ENCODE measurements at regions of chrX and their contacts with region 1.

Region 1: GRCh38 chrX:4944767-4945166 is 1231.3 kb upstream of the PRKX start:
- DNase-seq: no peak
- H3K4me3 ChIP-seq: no peak overlapping the region
- H3K27ac ChIP-seq: no peak overlapping the region
- H3K4me1 ChIP-seq: no peaks in the 10 kb centered on the region
- H3K27me3 ChIP-seq: no peaks in the 10 kb centered on the region
- CTCF ChIP-seq: no peak

Region 2: GRCh38 chrX:4964112-4964511 is 19.3 kb after region 1 on chrX:
- CTCF ChIA-PET with region 1: no interaction called
- POLR2A ChIA-PET with region 1: no interaction called
- intact Hi-C with region 1: no loop called
- DNase-seq: no peak
- H3K4me3 ChIP-seq: no peak overlapping the region
- H3K27ac ChIP-seq: no peak overlapping the region
- H3K4me1 ChIP-seq: no peaks in the 10 kb centered on the region
- H3K27me3 ChIP-seq: no peaks in the 10 kb centered on the region
- CTCF ChIP-seq: no peak

Region 3: DNA sequence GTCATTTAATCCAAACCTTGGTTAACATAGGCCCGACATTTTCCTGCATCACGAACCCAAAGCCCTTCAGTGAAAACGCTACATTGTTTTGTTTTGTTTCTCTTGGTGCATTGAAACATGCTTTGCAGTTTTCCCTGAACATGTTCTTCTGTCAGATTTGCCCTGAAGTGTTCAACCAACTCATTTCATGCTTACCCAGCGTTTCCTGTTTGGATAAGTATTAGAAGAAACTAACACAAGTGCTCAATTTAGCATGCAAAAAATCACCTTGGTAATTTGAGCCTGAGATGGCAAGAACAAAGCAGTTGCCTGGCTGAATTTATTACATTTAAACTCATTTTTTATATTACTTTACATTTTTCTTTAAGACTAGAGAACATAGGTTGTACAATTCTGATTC is 1750.2 kb after region 1 on chrX:
- CTCF ChIA-PET with region 1: interaction called, 11 read pairs
- POLR2A ChIA-PET with region 1: no interaction called
- intact Hi-C with region 1: no loop called
- DNase-seq: no peak
- H3K4me3 ChIP-seq: no peak overlapping the region
- H3K27ac ChIP-seq: no peak overlapping the region
- H3K4me1 ChIP-seq: no peaks in the 10 kb centered on the region
- H3K27me3 ChIP-seq: no peaks in the 10 kb centered on the region
- CTCF ChIP-seq: no peak

Measured in PC-9 (cell line).